Activated CD4-positive, alpha-beta T cell treated with anti-CD3 and anti-CD28 coated beads, Interleukin-2, amount 10 ng/mL, durations not matched to agents 24 days and 14 days (primary cell): ENCODE measurements at regions of chr6 and their contacts with region 1.

Region 1: GRCh38 chr6:153032255-153032882 is 29.9 kb upstream of the MTRF1L start:
- DNase-seq: no peak
- H3K4me3 Mint-ChIP-seq: no peak overlapping the region
- H3K27ac Mint-ChIP-seq: no peak overlapping the region
- H3K4me1 Mint-ChIP-seq: no peaks in the 10 kb centered on the region
- H3K27me3 Mint-ChIP-seq: peaks cover 24% of the 10 kb centered on the region

Region 2: GRCh38 chr6:152943260-152943896 is 89.0 kb before region 1 on chr6:
- intact Hi-C with region 1: no loop called
- DNase-seq: no peak
- H3K4me3 Mint-ChIP-seq: no peak overlapping the region
- H3K27ac Mint-ChIP-seq: no peak overlapping the region
- H3K4me1 Mint-ChIP-seq: peaks cover 6% of the 10 kb centered on the region
- H3K27me3 Mint-ChIP-seq: peaks cover 33% of the 10 kb centered on the region

Region 3: GRCh38 chr6:152975204-152975915 is 57.0 kb before region 1 on chr6:
- intact Hi-C with region 1: no loop called
- DNase-seq: peak; percentile 73
- H3K4me3 Mint-ChIP-seq: peak overlapping the region; percentile 78
- H3K27ac Mint-ChIP-seq: peak overlapping the region; percentile 76
- H3K4me1 Mint-ChIP-seq: peaks cover 55% of the 10 kb centered on the region
- H3K27me3 Mint-ChIP-seq: no peaks in the 10 kb centered on the region

Region 4: DNA sequence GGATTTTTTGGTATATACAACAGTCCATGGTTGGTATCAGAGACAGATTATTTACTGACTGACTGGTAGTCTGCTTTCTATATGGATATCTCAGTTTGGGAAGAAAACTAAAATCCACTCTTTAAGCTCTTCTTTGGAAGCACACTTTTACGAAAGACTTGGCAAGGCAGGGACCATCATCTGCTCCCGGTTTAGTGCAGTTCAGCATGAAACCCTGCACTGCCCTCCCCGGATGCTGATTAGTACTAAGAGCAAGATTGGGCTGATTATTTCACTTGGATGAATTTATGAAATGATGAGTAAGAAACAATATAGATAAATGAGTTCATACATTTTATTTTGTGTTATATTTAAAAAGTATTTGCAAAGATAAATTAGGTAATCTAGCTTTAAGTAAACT is 42.4 kb after region 1 on chr6:
- intact Hi-C with region 1: no loop called
- DNase-seq: no peak
- H3K4me3 Mint-ChIP-seq: no peak overlapping the region
- H3K27ac Mint-ChIP-seq: no peak overlapping the region
- H3K4me1 Mint-ChIP-seq: no peaks in the 10 kb centered on the region
- H3K27me3 Mint-ChIP-seq: no peaks in the 10 kb centered on the region

Region 5: GRCh38 chr6:153263489-153263888 is 231.1 kb after region 1 on chr6:
- intact Hi-C with region 1: no loop called
- DNase-seq: no peak
- H3K4me3 Mint-ChIP-seq: no peak overlapping the region
- H3K27ac Mint-ChIP-seq: no peak overlapping the region
- H3K4me1 Mint-ChIP-seq: no peaks in the 10 kb centered on the region
- H3K27me3 Mint-ChIP-seq: no peaks in the 10 kb centered on the region

Region 6: DNA sequence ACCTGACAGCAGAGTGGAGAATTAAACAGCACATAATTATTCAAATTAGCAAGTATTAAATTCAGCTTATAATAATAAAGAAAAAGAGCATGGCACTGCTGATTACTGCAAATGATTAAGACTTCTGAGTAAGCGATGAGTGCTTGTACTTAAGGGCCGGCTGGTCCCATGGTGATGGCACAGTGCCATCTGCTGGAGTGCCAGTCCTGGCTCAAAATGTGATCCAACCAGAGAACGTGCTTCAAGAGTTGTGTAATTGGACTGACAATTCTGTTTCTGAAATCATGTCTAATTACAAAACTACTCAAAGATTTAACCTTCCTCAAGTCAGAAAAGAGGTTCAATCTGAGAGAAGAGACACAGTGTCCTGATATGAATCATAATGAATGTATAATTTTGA is 280.3 kb after region 1 on chr6:
- intact Hi-C with region 1: loop called (anchors 2 kb)
- DNase-seq: peak; percentile 72
- H3K4me3 Mint-ChIP-seq: no peak overlapping the region
- H3K27ac Mint-ChIP-seq: no peak overlapping the region
- H3K4me1 Mint-ChIP-seq: no peaks in the 10 kb centered on the region
- H3K27me3 Mint-ChIP-seq: no peaks in the 10 kb centered on the region